ENCODE measurements at regions of chr1 and their contacts with region 1.

Region 1: GRCh38 chr1:81021134-81021533 is 779.6 kb upstream of the ADGRL2 start:
- DNase-seq: no peak
- ATAC-seq: no peak

Region 2: GRCh38 chr1:80994934-80995333 is 26.2 kb before region 1 on chr1:
- intact Hi-C with region 1: loop called (anchors 1 kb)
- DNase-seq: no peak
- ATAC-seq: no peak

Measured in sciatic nerve (tissue), 2 donors.